Heart right ventricle (tissue), 16 donors: ENCODE measurements at regions of chr2 and their contacts with region 1.

Region 1: DNA sequence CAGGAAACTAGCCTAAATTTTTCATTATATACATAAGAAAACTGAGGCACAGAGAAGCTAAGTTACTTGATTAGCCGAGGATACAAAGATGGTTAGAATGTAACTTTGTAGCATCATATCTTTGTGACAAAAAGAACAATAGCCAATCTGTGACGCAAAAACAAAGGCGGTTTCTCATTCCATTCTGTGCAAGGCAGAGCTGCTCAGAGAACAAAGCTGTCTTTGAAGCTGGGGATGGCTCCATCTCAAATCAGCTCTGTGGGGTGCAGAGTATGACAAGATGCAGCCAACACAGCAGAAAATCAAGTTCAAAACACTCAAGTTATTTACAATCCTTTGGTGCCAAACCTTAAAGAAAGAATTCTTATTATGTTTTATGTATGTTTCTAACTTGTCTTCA is 81.9 kb upstream of the VWC2L start:
- DNase-seq: no peak
- ATAC-seq: no peak
- H3K4me3 ChIP-seq: no peak overlapping the region
- H3K27ac ChIP-seq: no peak overlapping the region
- H3K4me1 ChIP-seq: no peaks in the 10 kb centered on the region
- H3K27me3 ChIP-seq: no peaks in the 10 kb centered on the region
- CTCF ChIP-seq: no peak

Region 2: DNA sequence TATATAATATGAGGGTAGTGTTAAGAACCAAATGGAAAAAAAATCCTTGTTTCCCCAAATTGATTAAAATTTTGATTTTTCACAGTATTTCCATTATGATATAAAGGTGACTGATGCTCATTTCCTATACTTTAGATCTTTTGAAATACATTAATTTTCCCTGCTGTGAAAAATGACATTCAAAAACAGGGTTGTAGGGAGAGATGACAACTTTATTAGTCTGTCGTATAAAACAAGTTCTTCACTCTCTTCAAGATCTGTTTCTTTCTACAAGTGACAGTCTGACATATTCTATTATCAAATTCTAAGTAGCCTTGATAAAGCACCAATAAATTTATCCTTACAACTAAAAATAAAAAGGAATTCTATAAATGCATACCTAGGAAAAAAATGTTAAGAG is 36.6 kb after region 1 on chr2:
- intact Hi-C with region 1: loop called in 1 of 10 experiments (anchors 1 kb)
- DNase-seq: no peak
- ATAC-seq: no peak
- H3K4me3 ChIP-seq: no peak overlapping the region
- H3K27ac ChIP-seq: no peak overlapping the region
- H3K4me1 ChIP-seq: no peaks in the 10 kb centered on the region
- H3K27me3 ChIP-seq: no peaks in the 10 kb centered on the region
- CTCF ChIP-seq: no peak

Region 3: GRCh38 chr2:214378277-214379116 is 49.6 kb after region 1 on chr2:
- intact Hi-C with region 1: no loop called
- DNase-seq: no peak
- ATAC-seq: no peak
- H3K4me3 ChIP-seq: no peak overlapping the region
- H3K27ac ChIP-seq: no peak overlapping the region
- H3K4me1 ChIP-seq: no peaks in the 10 kb centered on the region
- H3K27me3 ChIP-seq: no peaks in the 10 kb centered on the region
- CTCF ChIP-seq: no peak